AG04449 (cell line): ENCODE measurements at regions of chr6 and their contacts with region 1.

Region 1: DNA sequence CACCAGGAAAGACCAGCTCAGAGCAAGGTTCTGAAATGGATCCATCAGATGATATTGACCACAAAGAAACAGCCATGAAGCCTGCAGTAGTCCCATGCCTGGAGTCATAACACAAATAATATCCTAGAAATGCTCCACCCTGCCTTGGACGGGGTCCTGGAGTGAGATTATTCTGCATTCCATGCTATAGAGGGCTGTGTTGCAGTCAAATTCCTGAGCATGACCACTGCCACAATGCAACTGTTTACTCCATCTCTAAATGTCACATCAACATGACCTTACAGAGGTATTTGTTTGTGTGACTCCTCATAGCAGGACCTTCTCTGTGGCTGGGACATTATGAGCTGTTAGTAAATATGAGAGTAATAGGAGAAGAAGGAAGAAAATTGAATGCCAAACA is 257.5 kb upstream of the TCF21 start:
- DNase-seq: no peak
- H3K4me3 ChIP-seq: no peak overlapping the region
- CTCF ChIP-seq: peak; percentile 23

Region 2: DNA sequence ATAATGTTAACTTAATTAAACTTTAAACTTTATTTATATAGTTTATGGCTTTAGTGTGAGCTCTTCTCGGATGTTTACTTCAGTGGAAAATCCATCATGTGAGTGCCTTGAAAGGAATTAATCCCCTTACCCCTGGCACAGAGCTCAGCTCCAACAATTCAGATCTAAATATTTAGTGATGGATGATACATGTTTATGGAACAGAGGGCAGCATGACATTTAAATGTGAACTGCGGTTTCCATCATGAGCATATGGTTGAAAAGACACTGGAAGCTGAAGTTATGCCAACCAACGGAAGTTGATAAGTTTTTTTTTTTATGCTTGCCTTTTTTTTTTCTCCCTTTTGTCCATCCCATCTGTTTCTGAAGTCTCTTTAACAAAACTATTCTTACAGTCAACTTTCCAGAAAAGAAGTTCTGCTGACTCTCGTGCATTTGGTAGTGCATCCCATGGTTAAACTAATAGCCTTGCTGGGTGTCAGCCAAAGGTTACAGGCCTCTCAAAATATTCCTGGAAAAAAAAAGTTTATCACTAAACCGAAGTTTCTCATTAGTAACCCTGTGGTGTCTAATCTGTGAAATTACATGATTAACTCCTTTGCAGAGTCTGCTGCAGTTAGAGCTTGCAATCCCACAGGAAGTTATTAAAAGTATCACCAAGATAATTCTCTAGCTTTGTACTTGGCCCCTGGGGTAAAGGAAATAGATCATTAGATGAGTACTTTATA is 13.6 kb after region 1 on chr6:
- CTCF ChIA-PET with region 1: interaction called, 14 read pairs
- POLR2A ChIA-PET with region 1: no interaction called
- DNase-seq: no peak
- H3K4me3 ChIP-seq: no peak overlapping the region
- CTCF ChIP-seq: no peak